ENCODE measurements at regions of chr9 and their contacts with region 1.

Region 1: GRCh38 chr9:121399883-121400607 is 30.0 kb upstream of the STOM start:
- DNase-seq: no peak
- H3K4me3 Mint-ChIP-seq: no peak overlapping the region
- H3K27ac Mint-ChIP-seq: no peak overlapping the region
- H3K4me1 Mint-ChIP-seq: no peaks in the 10 kb centered on the region
- H3K27me3 Mint-ChIP-seq: peaks cover 13% of the 10 kb centered on the region

Region 2: DNA sequence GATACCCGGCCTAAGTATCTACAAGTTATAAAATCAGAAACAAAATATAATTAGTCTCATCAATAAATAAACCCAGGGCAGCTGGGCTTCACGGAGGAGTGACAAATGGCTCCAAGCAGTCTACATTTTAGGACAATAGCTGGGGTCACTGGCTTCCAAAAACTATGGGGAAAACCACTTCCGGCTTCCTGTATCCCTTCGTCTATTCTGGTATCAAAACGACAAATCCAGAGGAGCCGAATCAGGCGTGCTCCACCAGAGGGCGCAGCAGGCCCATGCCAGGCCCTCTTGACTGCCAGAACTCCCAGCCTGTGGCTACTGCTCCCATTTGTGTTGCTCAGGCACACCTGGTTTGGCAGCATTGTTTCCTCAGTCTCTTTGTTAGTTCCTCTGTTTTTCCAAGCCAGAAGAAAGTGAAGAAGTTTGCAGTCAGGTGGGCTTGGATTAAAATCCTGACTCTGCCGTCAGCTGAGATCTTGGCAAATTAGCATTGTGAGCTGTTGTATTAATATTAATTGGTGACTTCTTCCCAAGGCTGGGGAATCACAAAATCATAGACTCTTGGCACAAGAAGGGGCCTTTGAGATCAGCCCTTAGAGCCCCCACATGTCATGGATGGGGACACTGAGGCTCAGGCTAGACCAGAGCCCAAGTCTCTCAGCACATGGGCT is 186.8 kb before region 1 on chr9:
- CTCF ChIA-PET with region 1: interaction called, 50 read pairs
- DNase-seq: peak; percentile 79
- H3K4me3 Mint-ChIP-seq: no peak overlapping the region
- H3K27ac Mint-ChIP-seq: no peak overlapping the region
- H3K4me1 Mint-ChIP-seq: peaks cover 14% of the 10 kb centered on the region
- H3K27me3 Mint-ChIP-seq: no peaks in the 10 kb centered on the region

Region 3: DNA sequence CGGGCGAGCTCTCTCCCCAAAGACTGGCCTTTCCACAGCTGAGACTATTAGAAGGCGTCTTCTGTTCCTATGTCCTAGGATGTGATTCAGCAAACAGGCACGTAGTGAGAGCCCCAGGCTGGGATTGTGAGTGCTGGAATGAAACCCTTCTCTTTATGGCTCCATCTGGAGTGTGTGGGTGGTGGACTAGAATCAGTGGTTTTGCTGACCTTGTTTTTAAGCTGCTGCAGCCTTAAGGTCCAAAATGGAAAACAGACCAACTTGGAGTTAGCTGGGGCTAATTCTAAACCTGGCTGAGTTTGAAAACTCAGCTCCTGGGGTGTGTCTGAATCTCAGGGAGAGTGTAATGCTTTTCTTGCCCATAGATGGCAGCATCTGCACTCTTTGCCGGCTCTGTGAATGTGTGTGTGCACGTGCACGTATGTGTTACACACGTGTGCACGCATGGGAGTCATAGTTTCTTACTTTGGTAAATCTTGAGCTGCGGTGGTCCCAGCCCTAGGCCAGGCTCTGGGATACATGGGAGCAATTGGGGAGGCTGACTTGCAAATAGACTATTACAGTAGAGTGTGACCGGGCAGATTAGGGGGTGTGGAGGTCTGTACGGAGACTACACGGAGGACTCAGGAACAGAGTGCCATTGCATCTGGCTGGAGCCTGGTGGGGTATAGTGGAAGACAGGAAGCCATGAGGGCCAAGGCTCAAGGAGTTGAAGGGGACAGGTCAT is 121.3 kb before region 1 on chr9:
- CTCF ChIA-PET with region 1: interaction called, 17 read pairs
- DNase-seq: peak; percentile 55
- H3K4me3 Mint-ChIP-seq: no peak overlapping the region
- H3K27ac Mint-ChIP-seq: no peak overlapping the region
- H3K4me1 Mint-ChIP-seq: peaks cover 5% of the 10 kb centered on the region
- H3K27me3 Mint-ChIP-seq: peaks cover 20% of the 10 kb centered on the region

Region 4: GRCh38 chr9:121326130-121326838 is 73.8 kb before region 1 on chr9:
- CTCF ChIA-PET with region 1: interaction called, 326 read pairs
- DNase-seq: no peak
- H3K4me3 Mint-ChIP-seq: no peak overlapping the region
- H3K27ac Mint-ChIP-seq: no peak overlapping the region
- H3K4me1 Mint-ChIP-seq: peaks cover 15% of the 10 kb centered on the region
- H3K27me3 Mint-ChIP-seq: no peaks in the 10 kb centered on the region

Region 5: GRCh38 chr9:121388140-121388905 is 11.7 kb before region 1 on chr9:
- CTCF ChIA-PET with region 1: interaction called, 17 read pairs
- DNase-seq: no peak
- H3K4me3 Mint-ChIP-seq: no peak overlapping the region
- H3K27ac Mint-ChIP-seq: peak overlapping the region; percentile 52
- H3K4me1 Mint-ChIP-seq: peaks cover 13% of the 10 kb centered on the region
- H3K27me3 Mint-ChIP-seq: peaks cover 30% of the 10 kb centered on the region

Measured in activated naive CD4-positive, alpha-beta T cell treated with anti-CD3 and anti-CD28 coated beads, Interleukin-2, amount 10 ng/mL, durations not matched to agents 7 days and 5 days (primary cell).